AG04449 (cell line): ENCODE measurements at regions of chr4 and their contacts with region 1.

Region 1: GRCh38 chr4:145945431-145946155 is 7.0 kb upstream of the ZNF827 start:
- DNase-seq: no peak
- H3K4me3 ChIP-seq: no peak overlapping the region
- CTCF ChIP-seq: no peak

Region 2: GRCh38 chr4:145956288-145956890 is 10.8 kb after region 1 on chr4:
- CTCF ChIA-PET with region 1: interaction called, 11 read pairs
- POLR2A ChIA-PET with region 1: no interaction called
- DNase-seq: no peak
- H3K4me3 ChIP-seq: no peak overlapping the region
- CTCF ChIP-seq: peak; percentile 66